A673 (cell line): ENCODE measurements at regions of chr20 and their contacts with region 1.

Region 1: GRCh38 chr20:60222497-60222896 is 264.3 kb downstream of the CDH26 start:
- DNase-seq: no peak
- H3K4me3 ChIP-seq: no peak overlapping the region
- H3K27ac ChIP-seq: no peak overlapping the region
- H3K4me1 ChIP-seq: no peaks in the 10 kb centered on the region
- H3K27me3 ChIP-seq: no peaks in the 10 kb centered on the region
- CTCF ChIP-seq: no peak

Region 2: GRCh38 chr20:60283281-60283680 is 60.8 kb after region 1 on chr20:
- CTCF ChIA-PET with region 1: no interaction called
- POLR2A ChIA-PET with region 1: no interaction called
- intact Hi-C with region 1: no loop called
- DNase-seq: no peak
- H3K4me3 ChIP-seq: no peak overlapping the region
- H3K27ac ChIP-seq: no peak overlapping the region
- H3K4me1 ChIP-seq: no peaks in the 10 kb centered on the region
- H3K27me3 ChIP-seq: no peaks in the 10 kb centered on the region
- CTCF ChIP-seq: no peak

Region 3: DNA sequence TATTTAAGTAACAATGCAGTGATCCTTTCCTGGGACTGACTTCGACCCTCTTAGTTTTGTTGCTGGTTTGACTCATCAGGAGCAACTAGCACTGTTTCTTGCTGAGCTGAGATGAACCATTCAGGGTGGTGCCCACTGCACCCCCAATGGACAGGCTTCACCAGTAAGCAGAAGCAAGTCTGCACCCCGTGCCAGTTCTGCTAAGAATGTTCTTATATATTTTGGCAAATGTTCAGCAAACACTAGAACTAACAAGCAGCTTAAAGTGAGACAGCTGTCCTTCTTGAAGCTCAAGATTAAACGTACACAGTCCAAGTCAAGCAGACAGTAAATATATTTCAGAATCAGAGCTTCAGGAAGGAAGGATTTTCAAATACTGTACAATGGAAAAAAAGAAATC is 468.3 kb after region 1 on chr20:
- CTCF ChIA-PET with region 1: no interaction called
- POLR2A ChIA-PET with region 1: interaction called, 15 read pairs
- intact Hi-C with region 1: no loop called
- DNase-seq: no peak
- H3K4me3 ChIP-seq: no peak overlapping the region
- H3K27ac ChIP-seq: no peak overlapping the region
- H3K4me1 ChIP-seq: no peaks in the 10 kb centered on the region
- H3K27me3 ChIP-seq: peaks cover 15% of the 10 kb centered on the region
- CTCF ChIP-seq: no peak